Left lung (tissue), 14 donors: ENCODE measurements at regions of chr5 and their contacts with region 1.

Region 1: GRCh38 chr5:164504141-164504772 is 998.8 kb downstream of the MAT2B start:
- DNase-seq: peak in 2 of 4 donors; percentile 54 to 76
- ATAC-seq: peak; percentile 80
- H3K4me3 ChIP-seq: no peak overlapping the region
- H3K27ac ChIP-seq: no peak overlapping the region
- H3K4me1 ChIP-seq: no peaks in the 10 kb centered on the region
- H3K27me3 ChIP-seq: no peaks in the 10 kb centered on the region
- CTCF ChIP-seq: peak; percentile 61 to 73

Region 2: GRCh38 chr5:163564321-163564938 is 939.8 kb before region 1 on chr5:
- intact Hi-C with region 1: loop called in 1 of 2 experiments (anchors 10 kb)
- DNase-seq: peak in 2 of 4 donors; percentile 56 to 69
- ATAC-seq: peak; percentile 90
- H3K4me3 ChIP-seq: no peak overlapping the region
- H3K27ac ChIP-seq: no peak overlapping the region
- H3K4me1 ChIP-seq: peaks cover 13 to 15% of the 10 kb centered on the region in 2 donors
- H3K27me3 ChIP-seq: peaks cover 18 to 47% of the 10 kb centered on the region in 2 donors
- CTCF ChIP-seq: peak; percentile 90 to 91

Region 3: GRCh38 chr5:163695830-163696578 is 808.3 kb before region 1 on chr5:
- intact Hi-C with region 1: loop called in 1 of 2 experiments (anchors 5 kb)
- DNase-seq: peak in 2 of 4 donors; percentile 46 to 70
- ATAC-seq: peak; percentile 97
- H3K4me3 ChIP-seq: no peak overlapping the region
- H3K27ac ChIP-seq: no peak overlapping the region
- H3K4me1 ChIP-seq: no peaks in the 10 kb centered on the region
- H3K27me3 ChIP-seq: no peaks in the 10 kb centered on the region
- CTCF ChIP-seq: peak; percentile 39 to 47

Region 4: GRCh38 chr5:164013077-164013670 is 491.1 kb before region 1 on chr5:
- intact Hi-C with region 1: loop called in 1 of 2 experiments (anchors 10 kb)
- DNase-seq: peak in 2 of 4 donors; percentile 59 to 81
- ATAC-seq: peak; percentile 87
- H3K4me3 ChIP-seq: no peak overlapping the region
- H3K27ac ChIP-seq: no peak overlapping the region
- H3K4me1 ChIP-seq: no peaks in the 10 kb centered on the region
- H3K27me3 ChIP-seq: no peaks in the 10 kb centered on the region
- CTCF ChIP-seq: peak; percentile 49 to 61

Region 5: GRCh38 chr5:164868761-164869160 is 364.5 kb after region 1 on chr5:
- intact Hi-C with region 1: no loop called
- DNase-seq: no peak
- ATAC-seq: no peak
- H3K4me3 ChIP-seq: no peak overlapping the region
- H3K27ac ChIP-seq: no peak overlapping the region
- H3K4me1 ChIP-seq: no peaks in the 10 kb centered on the region
- H3K27me3 ChIP-seq: no peaks in the 10 kb centered on the region
- CTCF ChIP-seq: no peak